Pancreas (tissue), 10 donors: ENCODE measurements at regions of chr2 and their contacts with region 1.

Region 1: DNA sequence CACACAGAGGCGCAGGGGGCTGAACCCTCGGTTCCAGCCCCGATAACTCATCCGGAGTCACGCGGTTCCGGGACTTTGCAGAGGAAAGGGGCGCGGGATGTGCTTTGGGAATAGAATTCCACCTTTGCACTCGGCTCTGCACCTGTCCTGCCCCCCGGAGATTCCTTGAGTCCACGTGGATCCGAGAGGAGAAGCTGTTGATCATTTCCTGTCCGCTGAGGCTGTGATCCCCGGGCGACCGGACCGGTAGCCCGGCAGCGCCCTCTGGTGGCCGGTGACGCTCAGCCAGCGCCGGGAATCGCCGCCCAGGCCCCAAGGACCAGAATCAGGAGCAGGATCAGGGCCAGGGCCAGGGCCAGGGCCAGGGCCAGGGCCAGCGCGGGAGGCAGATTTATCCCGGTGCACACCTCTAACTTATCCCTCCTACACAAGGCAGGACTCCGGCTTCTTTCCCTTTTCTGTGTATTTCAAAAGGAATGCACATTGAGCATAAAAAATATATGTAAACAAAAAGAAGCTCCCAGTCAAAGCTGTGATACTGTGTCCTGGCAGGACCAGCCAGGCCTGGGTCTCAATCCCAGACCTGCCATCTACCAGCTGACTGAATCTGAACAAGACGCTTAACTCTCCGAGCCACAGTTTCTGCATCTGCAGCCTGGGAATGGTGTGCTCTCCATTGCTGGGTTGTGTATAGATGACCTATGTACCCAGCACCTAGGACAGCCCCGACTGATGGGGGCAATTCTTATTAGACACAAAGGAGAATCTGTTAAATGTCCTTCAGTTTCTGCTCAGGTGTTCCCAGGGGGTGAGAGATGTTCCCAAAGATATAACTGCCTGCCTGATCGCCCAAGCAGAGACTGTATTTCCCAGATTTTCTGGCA is 8.5 kb upstream of the SPATA3 start:
- DNase-seq: peak; percentile 64 to 98 (median 87)
- ATAC-seq: peak; percentile 95 to 99 (median 98)
- H3K4me3 ChIP-seq: peak overlapping the region; percentile 10 to 39 (median 30)
- H3K27ac ChIP-seq: no peak overlapping the region
- H3K4me1 ChIP-seq: no peaks in the 10 kb centered on the region
- H3K27me3 ChIP-seq: peaks cover 0 to 6% (median 2%) of the 10 kb centered on the region in 4 donors
- CTCF ChIP-seq: peak; percentile 92 to 97 (median 96)

Region 2: DNA sequence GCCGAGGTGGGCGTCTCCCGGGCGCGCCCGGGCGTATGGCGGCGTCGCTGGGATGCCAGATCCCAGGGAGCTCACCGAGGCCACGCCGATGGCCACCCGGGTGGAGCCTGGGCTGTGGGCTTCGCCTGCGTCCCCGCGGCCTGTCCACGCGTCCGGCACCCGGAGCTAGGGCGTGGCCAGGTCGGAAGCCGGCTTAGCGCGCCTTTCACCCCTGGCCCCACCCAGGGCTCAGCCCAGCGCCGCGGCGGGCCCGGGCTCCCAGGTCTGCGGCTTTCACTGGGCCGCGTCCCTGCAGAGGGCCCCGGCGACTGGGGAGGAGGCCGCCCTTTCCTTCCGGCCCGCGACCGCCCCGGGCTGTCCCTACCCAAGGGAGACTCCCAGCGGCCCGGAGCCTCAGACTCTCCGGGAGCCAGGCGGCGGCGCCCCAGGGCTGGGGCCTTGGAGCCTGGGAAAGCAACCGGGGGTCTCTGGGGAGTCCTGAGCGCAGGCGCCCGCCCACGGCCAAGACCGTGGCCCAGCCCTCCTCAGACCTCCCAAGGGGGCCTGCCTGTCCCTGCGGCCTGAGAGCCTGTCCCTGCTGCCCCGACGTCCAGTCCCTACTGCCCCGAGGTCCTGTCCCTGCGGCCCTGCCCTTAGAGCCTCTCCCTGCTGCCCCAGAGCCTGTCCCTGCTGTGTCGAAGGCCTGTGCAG is 159.0 kb before region 1 on chr2:
- intact Hi-C with region 1: loop called in 2 of 3 experiments (anchors 5 kb)
- DNase-seq: peak in 1 of 6 donors; percentile 67
- ATAC-seq: peak in 3 of 4 donors; percentile 36 to 47 (median 37)
- H3K4me3 ChIP-seq: peak overlapping the region in 2 of 4 donors; percentile 22 to 32
- H3K27ac ChIP-seq: no peak overlapping the region
- H3K4me1 ChIP-seq: no peaks in the 10 kb centered on the region
- H3K27me3 ChIP-seq: peaks cover 0 to 4% (median 0%) of the 10 kb centered on the region in 4 donors
- CTCF ChIP-seq: no peak

Region 3: GRCh38 chr2:230847883-230848388 is 139.4 kb before region 1 on chr2:
- intact Hi-C with region 1: loop called in 1 of 3 experiments (anchors 5 kb)
- DNase-seq: peak; percentile 65 to 96 (median 81)
- ATAC-seq: peak; percentile 89 to 99 (median 96)
- H3K4me3 ChIP-seq: no peak overlapping the region
- H3K27ac ChIP-seq: no peak overlapping the region
- H3K4me1 ChIP-seq: no peaks in the 10 kb centered on the region
- H3K27me3 ChIP-seq: peaks cover 0 to 4% (median 0%) of the 10 kb centered on the region in 4 donors
- CTCF ChIP-seq: peak; percentile 69 to 85 (median 78)